ENCODE measurements at regions of chr4 and their contacts with region 1.

Region 1: GRCh38 chr4:171846232-171846631 is 33.0 kb downstream of the GALNTL6 start:
- DNase-seq: peak; percentile 29 to 65 (median 46)
- H3K4me3 ChIP-seq: no peak overlapping the region
- H3K27ac ChIP-seq: no peak overlapping the region
- H3K4me1 ChIP-seq: no peaks in the 10 kb centered on the region
- H3K27me3 ChIP-seq: no peaks in the 10 kb centered on the region
- CTCF ChIP-seq: peak in 5 of 6 experiments; percentile 17 to 48 (median 41)
- POLR2A ChIP-seq: no peak

Region 2: DNA sequence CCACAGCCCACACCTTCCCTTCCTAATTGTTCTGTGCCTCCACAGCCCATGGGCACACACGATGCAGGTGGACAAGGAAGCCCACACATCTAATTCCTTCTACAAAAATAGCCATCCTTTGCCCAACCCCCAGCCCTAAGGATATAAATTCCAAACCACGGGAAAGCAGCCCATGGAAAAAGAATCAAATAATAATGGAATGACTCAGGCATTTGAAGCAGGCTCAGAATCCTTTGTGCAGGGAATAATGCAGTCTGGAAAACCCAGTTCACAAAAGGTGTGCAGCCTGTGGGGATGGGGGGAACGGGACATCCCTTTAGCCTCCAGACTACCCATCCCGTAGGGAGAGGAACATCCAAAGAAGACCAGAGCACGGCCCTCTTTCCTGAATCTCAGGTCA is 980.1 kb after region 1 on chr4:
- intact Hi-C with region 1: loop called in 1 of 2 experiments (anchors 10 kb)
- DNase-seq: no peak
- H3K4me3 ChIP-seq: no peak overlapping the region
- H3K27ac ChIP-seq: no peak overlapping the region
- H3K4me1 ChIP-seq: no peaks in the 10 kb centered on the region
- H3K27me3 ChIP-seq: no peaks in the 10 kb centered on the region
- CTCF ChIP-seq: no peak
- POLR2A ChIP-seq: no peak

Measured in adrenal gland (tissue), 19 donors.